ENCODE measurements at regions of chr20 and their contacts with region 1.

Region 1: DNA sequence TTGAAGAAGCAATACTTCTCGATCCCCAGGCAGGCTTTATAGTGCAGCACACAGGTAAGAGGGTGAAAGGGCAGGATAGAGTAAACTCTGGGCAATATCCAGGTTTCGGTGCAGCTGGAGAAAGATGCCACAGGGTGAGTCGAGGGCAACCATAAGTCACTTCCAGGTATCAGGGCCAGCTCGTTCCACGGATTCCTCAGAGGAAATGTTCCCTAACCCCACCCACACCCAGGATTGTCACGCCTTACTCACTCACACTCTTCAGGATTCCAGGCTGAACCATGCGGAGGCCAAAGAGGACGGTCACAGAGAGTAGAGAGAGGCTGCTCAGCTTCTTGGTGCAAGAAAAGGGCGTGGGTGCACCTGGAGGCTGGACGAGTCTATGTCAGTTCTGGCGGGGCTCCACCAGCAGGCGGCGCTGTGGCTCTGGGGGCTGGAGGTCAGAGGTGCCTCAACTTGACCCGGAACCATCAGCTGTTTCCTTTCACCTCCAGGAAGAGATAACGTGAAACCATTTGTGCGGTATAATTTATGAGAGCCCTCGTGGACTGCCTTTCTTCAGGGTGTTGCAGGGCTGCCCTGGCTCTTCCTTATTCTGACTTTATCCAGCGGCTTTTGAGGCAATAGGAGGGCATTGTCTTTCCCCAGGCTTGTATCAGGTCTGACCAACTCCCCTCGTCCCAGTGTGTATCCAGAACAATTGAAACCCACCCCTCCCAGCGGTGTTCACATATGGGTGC is 14.5 kb upstream of the WFDC12 start:
- DNase-seq: no peak
- H3K4me3 ChIP-seq: no peak overlapping the region
- H3K27ac ChIP-seq: no peak overlapping the region
- H3K4me1 ChIP-seq: no peaks in the 10 kb centered on the region
- H3K27me3 ChIP-seq: no peaks in the 10 kb centered on the region
- CTCF ChIP-seq: no peak
- EP300 ChIP-seq: no peak
- POLR2A ChIP-seq: no peak

Region 2: GRCh38 chr20:43349846-43350245 is 1788.9 kb before region 1 on chr20:
- intact Hi-C with region 1: loop called in 1 of 4 experiments (anchors 5 kb)
- DNase-seq: no peak
- H3K4me3 ChIP-seq: no peak overlapping the region
- H3K27ac ChIP-seq: no peak overlapping the region
- H3K4me1 ChIP-seq: no peaks in the 10 kb centered on the region
- H3K27me3 ChIP-seq: no peaks in the 10 kb centered on the region
- CTCF ChIP-seq: no peak
- EP300 ChIP-seq: no peak
- POLR2A ChIP-seq: no peak

Region 3: GRCh38 chr20:44928595-44928994 is 210.1 kb before region 1 on chr20:
- intact Hi-C with region 1: no loop called
- DNase-seq: no peak
- H3K4me3 ChIP-seq: no peak overlapping the region
- H3K27ac ChIP-seq: no peak overlapping the region
- H3K4me1 ChIP-seq: no peaks in the 10 kb centered on the region
- H3K27me3 ChIP-seq: no peaks in the 10 kb centered on the region
- CTCF ChIP-seq: no peak
- EP300 ChIP-seq: no peak
- POLR2A ChIP-seq: no peak